ENCODE measurements at regions of chr4 and their contacts with region 1.

Region 1: DNA sequence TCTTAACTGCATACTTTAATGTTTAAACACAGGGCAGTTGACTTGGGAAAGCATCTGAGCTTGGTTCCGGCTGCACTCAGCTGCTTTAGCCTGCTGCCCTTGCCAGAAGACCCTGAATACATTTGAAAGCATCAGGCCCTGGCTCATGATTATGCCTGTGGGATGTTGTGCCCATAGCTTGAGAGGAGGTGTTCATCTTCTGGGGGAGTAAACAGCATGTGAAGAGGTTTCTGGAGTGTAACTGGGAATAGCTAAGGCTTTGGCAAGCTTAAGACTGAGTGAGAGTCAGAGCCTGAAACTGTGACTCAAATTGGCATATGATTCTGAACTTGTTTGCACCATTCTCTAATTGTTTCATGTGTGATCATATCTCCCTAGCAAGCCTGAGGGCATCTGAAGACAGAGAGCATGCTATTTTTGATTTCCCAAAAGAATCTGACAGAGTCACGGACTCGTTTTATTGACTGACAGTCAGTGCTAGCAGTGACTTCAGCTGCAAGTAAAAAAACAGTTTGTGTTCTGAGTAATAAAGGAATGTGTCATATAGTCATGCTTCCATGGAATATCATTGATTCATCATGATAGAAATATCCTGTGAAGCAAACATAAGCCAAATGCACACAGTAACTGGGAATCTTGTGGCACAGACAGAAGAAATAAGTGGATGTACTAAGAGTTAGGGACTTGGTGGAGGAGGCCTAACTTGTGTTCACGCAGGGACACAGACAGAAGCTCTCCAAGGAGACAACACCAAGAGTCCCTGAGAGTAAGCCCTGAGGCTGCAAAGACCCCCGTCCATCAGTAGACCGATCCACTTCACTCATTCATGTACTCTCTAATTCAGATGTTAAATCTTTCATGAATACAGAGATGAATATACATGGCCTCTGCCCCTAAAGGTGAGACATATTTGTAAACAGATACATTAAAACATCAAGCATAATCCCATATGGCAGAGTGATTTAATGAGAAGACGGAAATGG is 100.7 kb downstream of the SYNPO2 start:
- DNase-seq: peak; percentile 94
- ATAC-seq: peak; percentile 88
- H3K4me3 ChIP-seq: no peak overlapping the region
- H3K27ac ChIP-seq: peak overlapping the region; percentile 95
- H3K4me1 ChIP-seq: peaks cover 30% of the 10 kb centered on the region
- H3K27me3 ChIP-seq: no peaks in the 10 kb centered on the region
- CTCF ChIP-seq: no peak

Region 2: DNA sequence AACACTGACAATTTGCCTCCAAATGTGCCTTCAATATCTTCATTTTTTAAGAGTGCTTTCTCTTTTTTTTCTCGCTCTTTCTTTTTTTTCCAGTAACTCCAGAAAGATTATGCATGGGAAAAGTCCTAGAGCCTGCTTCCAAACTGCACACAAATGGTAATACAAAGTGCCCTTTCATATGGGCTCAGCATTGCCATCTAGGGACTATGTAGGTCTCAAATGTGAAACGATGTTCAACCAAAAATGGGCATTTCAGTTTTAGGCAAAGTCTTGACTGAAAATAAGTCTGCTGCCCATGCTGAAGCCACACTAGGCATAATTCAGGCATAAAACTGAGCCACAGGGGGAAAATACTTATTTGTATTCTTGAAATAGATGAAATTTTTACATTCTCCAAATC is 35.1 kb before region 1 on chr4:
- CTCF ChIA-PET with region 1: no interaction called
- POLR2A ChIA-PET with region 1: no interaction called
- intact Hi-C with region 1: no loop called
- DNase-seq: peak; percentile 47
- ATAC-seq: peak; percentile 68
- H3K4me3 ChIP-seq: no peak overlapping the region
- H3K27ac ChIP-seq: no peak overlapping the region
- H3K4me1 ChIP-seq: peaks cover 7% of the 10 kb centered on the region; the same call in 1 of the 2 replicates
- H3K27me3 ChIP-seq: no peaks in the 10 kb centered on the region
- CTCF ChIP-seq: peak; percentile 54

Region 3: DNA sequence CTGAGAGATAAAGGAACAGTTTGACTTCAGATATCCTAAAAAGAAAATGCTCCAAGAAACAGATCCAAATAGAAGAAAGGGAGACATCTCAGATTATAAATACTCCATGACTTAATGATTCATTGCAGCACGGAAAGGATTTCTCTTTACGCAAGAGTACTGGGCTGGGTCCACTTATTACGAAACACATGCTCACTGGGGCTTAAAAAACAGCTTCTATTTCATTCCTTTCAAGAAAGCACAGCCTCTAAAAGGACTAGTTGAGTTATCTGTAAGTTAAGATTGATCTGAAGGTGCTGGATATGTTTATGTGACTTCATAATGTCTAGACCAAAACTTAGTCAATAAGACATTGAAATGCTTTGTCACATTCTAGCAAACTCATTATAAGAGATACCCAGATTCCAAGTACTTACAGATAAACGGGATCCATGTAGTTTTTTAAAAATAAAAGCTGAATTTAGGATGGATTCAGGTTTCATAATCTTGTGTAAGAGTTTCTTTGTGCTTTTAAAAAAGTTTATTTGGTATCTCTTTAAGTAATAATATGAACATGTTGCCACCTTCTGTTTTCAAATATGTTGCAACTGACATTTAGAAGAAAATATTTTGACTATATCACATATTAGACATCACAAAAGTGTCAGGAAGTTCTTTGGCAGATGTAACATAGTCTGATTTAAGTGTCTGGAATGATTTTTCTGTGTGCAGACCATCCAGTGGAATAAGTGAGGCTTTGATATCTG is 36.7 kb after region 1 on chr4:
- CTCF ChIA-PET with region 1: no interaction called
- POLR2A ChIA-PET with region 1: interaction called, 3 read pairs
- intact Hi-C with region 1: loop called (anchors 5 kb)
- DNase-seq: peak; percentile 60
- ATAC-seq: peak; percentile 30
- H3K4me3 ChIP-seq: peak overlapping the region; percentile 59; the same call in 1 of the 2 replicates
- H3K27ac ChIP-seq: peak overlapping the region; percentile 85
- H3K4me1 ChIP-seq: peaks cover 15% of the 10 kb centered on the region
- H3K27me3 ChIP-seq: no peaks in the 10 kb centered on the region
- CTCF ChIP-seq: no peak

Region 4: DNA sequence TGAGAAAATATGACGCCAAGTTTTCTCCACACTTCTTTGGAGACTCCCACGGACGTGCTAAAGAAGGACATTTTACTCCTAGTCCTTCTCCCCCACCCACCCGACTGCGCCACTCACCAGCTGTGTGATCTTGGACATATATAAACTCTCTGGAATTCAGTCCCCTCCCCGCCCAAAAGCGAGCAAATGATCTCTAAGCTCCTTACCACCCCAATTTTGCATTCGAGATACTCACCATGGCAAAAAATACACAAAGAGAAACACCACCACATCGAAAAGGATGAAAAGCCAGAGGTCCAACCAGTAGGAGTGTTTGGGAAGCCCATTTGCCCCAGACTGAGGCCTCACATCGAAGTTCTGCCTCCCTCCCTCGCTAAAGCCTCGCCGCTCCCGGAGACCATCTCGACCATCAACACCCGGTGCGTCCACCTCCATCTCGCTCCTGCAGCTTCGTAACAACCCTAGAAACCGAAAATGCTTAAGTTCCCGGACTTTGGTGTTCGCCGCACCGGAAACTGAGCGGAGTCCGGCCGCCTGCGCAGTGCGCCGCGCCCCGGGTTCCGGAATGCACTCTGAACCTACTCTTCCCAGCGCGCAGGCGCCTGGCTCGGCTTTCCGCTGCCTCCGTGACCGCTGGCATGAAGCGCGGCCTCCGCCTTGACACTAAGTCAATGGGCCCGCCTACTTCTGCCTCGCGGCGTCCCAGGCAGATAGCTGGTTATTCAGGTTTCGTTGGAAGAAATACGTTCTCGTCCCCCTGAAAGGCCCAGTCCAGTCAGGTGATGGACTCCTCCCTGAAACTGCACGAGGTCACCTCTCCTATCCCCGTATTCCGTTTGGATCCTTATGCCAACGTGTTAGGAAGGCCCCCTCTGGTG is 311.0 kb after region 1 on chr4:
- CTCF ChIA-PET with region 1: no interaction called
- POLR2A ChIA-PET with region 1: no interaction called
- intact Hi-C with region 1: loop called (anchors 5 kb)
- DNase-seq: peak; percentile 93
- ATAC-seq: peak; percentile 91
- H3K4me3 ChIP-seq: peak overlapping the region; percentile 99
- H3K27ac ChIP-seq: peak overlapping the region; percentile 72
- H3K4me1 ChIP-seq: peaks cover 14% of the 10 kb centered on the region
- H3K27me3 ChIP-seq: no peaks in the 10 kb centered on the region
- CTCF ChIP-seq: no peak